Naive thymus-derived CD4-positive, alpha-beta T cell (primary cell): ENCODE measurements at regions of chr4 and their contacts with region 1.

Region 1: DNA sequence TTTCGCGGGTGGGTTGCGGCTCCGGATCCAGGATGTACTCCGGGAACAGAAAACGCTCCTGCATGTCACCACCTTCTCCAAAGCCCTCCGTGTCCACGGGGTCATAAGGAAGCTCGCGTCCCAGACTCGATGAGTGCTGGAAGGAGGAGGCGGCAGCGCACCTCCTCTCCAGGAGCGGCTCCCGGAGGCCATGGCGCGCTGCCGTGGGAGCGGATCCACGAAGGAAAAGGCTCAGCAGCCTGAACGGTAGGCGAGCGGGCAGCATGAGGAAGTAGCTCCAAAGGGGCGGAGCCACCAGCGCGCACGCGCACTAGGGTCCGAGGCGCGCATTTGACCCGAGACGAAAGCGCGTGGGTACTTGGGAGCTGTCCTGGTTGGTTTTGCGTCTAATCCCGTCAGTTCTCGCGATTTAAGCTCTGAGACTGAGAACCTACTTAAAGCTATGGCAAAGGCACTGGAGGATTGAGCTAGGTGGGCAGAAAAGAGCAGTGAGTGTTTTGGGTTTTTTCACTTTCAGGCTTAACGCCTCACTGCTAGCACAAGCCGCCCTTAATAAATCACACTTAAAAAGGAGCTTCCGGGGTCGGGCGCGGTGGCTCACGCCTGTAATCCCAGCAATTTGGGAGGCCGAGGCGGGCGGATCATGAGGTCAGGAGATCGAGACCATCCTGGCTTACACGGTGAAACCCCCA is at the start of gene NOA1:
- DNase-seq: peak; percentile 98 to 99 (median 99)
- ATAC-seq: peak; percentile 86
- H3K4me3 ChIP-seq: peak within 1 kb of the TSS; percentile 80
- H3K4me3 Mint-ChIP-seq: peak within 1 kb of the TSS; percentile 92 to 100 (median 98)
- H3K27ac ChIP-seq: peak within 1 kb of the TSS; percentile 82
- H3K27ac Mint-ChIP-seq: peak within 1 kb of the TSS; percentile 94 to 100 (median 98)
- H3K4me1 ChIP-seq: peaks cover 36 to 38% of the 10 kb centered on the region in 2 donors
- H3K4me1 Mint-ChIP-seq: peaks cover 41 to 70% (median 52%) of the 10 kb centered on the region in 7 donors
- H3K27me3 ChIP-seq: no peaks in the 10 kb centered on the region
- H3K27me3 Mint-ChIP-seq: peaks cover 0 to 2% (median 0%) of the 10 kb centered on the region in 5 donors
- total RNA-seq, gene NOA1: 13.6 to 23.0 (median 20.9) TPM

Region 2: GRCh38 chr4:55617587-55618197 is 1359.8 kb before region 1 on chr4:
- CTCF ChIA-PET with region 1: no interaction called
- POLR2A ChIA-PET with region 1: no interaction called
- intact Hi-C with region 1: no loop called
- DNase-seq: no peak
- ATAC-seq: no peak
- H3K4me3 ChIP-seq: no peak overlapping the region
- H3K4me3 Mint-ChIP-seq: no peak overlapping the region
- H3K27ac ChIP-seq: no peak overlapping the region
- H3K27ac Mint-ChIP-seq: no peak overlapping the region
- H3K4me1 ChIP-seq: no peaks in the 10 kb centered on the region
- H3K4me1 Mint-ChIP-seq: peaks cover 0 to 8% (median 0%) of the 10 kb centered on the region in 7 donors
- H3K27me3 ChIP-seq: no peaks in the 10 kb centered on the region
- H3K27me3 Mint-ChIP-seq: peaks cover 8 to 19% (median 10%) of the 10 kb centered on the region in 5 donors

Region 3: GRCh38 chr4:55853484-55854046 is 1123.9 kb before region 1 on chr4 and contains the start of gene EXOC1:
- CTCF ChIA-PET with region 1: no interaction called
- POLR2A ChIA-PET with region 1: no interaction called
- intact Hi-C with region 1: loop called (anchors 5 kb)
- DNase-seq: peak; percentile 93 to 98 (median 94)
- ATAC-seq: peak; percentile 99
- H3K4me3 ChIP-seq: peak within 1 kb of the TSS; percentile 84
- H3K4me3 Mint-ChIP-seq: peak within 1 kb of the TSS in 2 of 10 donors; percentile 34 to 69
- H3K27ac ChIP-seq: peak within 1 kb of the TSS; percentile 87
- H3K27ac Mint-ChIP-seq: peak within 1 kb of the TSS in 7 of 9 donors; percentile 75 to 94 (median 90)
- H3K4me1 ChIP-seq: peaks cover 26 to 31% of the 10 kb centered on the region in 2 donors
- H3K4me1 Mint-ChIP-seq: peaks cover 22 to 48% (median 42%) of the 10 kb centered on the region in 7 donors
- H3K27me3 ChIP-seq: no peaks in the 10 kb centered on the region
- H3K27me3 Mint-ChIP-seq: no peaks in the 10 kb centered on the region
- total RNA-seq, gene EXOC1: 20.3 to 46.7 (median 32.1) TPM

Region 4: DNA sequence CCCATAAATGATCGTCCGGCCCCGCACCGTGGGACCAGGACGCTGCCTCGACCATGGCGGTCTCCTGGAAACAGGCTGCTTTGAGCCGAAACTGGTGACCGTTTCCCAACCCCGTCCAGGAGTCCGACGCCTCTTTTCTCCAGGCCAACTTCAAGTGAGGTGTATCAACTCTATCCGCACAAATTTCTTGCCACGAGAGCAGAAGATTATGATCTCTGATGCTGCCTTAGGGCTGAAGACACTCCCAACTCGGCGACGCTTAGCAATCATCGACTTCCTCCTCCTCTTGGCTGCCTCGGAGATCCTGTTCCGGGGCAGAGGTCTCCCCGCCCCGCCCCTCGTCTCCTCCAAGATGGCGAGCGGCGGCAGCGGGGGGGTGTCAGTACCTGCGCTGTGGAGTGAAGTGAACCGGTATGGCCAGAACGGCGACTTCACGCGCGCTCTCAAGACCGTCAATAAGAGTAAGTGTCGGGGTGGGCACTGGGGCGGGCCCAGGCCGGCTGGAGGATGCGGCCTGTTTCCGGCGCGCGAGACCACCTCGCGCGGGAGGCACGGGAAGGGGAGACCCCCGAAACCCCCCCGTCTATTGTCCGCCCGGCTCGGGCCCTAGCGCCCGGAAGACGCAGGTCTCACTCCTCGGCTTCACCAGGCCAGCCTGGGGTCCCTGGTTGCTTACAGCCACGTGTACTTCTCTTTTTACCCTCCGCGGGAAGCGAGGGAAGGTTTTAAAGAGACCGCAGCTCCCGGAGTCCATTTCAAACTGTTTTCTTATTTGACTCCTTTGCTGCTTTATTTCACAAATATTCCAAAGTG is 510.0 kb before region 1 on chr4 and contains the start of gene SRP72:
- CTCF ChIA-PET with region 1: no interaction called
- POLR2A ChIA-PET with region 1: interaction called, 3 read pairs
- intact Hi-C with region 1: loop called (anchors 1 kb)
- DNase-seq: peak; percentile 80 to 95 (median 88)
- ATAC-seq: peak; percentile 98
- H3K4me3 ChIP-seq: peak within 1 kb of the TSS; percentile 98
- H3K4me3 Mint-ChIP-seq: peak within 1 kb of the TSS; percentile 93 to 100 (median 96)
- H3K27ac ChIP-seq: peak within 1 kb of the TSS; percentile 90
- H3K27ac Mint-ChIP-seq: peak within 1 kb of the TSS; percentile 94 to 99 (median 96)
- H3K4me1 ChIP-seq: peaks cover 25 to 29% of the 10 kb centered on the region in 2 donors
- H3K4me1 Mint-ChIP-seq: peaks cover 46 to 68% (median 62%) of the 10 kb centered on the region in 7 donors
- H3K27me3 ChIP-seq: no peaks in the 10 kb centered on the region
- H3K27me3 Mint-ChIP-seq: no peaks in the 10 kb centered on the region
- total RNA-seq, gene SRP72: 98.4 to 145 (median 109) TPM

Region 5: GRCh38 chr4:56530269-56531148 is 447.0 kb before region 1 on chr4:
- CTCF ChIA-PET with region 1: no interaction called
- POLR2A ChIA-PET with region 1: no interaction called
- intact Hi-C with region 1: loop called (anchors 1 kb)
- DNase-seq: peak; percentile 53 to 75 (median 59)
- ATAC-seq: peak; percentile 99
- H3K4me3 ChIP-seq: peak overlapping the region; percentile 91
- H3K4me3 Mint-ChIP-seq: peak overlapping the region in 1 of 10 donors; percentile 70
- H3K27ac ChIP-seq: peak overlapping the region; percentile 44
- H3K27ac Mint-ChIP-seq: peak overlapping the region in 3 of 9 donors; percentile 26 to 55 (median 38)
- H3K4me1 ChIP-seq: peaks cover 0 to 4% of the 10 kb centered on the region in 2 donors
- H3K4me1 Mint-ChIP-seq: peaks cover 0 to 2% (median 0%) of the 10 kb centered on the region in 7 donors
- H3K27me3 ChIP-seq: peaks cover 0 to 4% of the 10 kb centered on the region in 2 donors
- H3K27me3 Mint-ChIP-seq: peaks cover 0 to 22% (median 7%) of the 10 kb centered on the region in 5 donors

Region 6: DNA sequence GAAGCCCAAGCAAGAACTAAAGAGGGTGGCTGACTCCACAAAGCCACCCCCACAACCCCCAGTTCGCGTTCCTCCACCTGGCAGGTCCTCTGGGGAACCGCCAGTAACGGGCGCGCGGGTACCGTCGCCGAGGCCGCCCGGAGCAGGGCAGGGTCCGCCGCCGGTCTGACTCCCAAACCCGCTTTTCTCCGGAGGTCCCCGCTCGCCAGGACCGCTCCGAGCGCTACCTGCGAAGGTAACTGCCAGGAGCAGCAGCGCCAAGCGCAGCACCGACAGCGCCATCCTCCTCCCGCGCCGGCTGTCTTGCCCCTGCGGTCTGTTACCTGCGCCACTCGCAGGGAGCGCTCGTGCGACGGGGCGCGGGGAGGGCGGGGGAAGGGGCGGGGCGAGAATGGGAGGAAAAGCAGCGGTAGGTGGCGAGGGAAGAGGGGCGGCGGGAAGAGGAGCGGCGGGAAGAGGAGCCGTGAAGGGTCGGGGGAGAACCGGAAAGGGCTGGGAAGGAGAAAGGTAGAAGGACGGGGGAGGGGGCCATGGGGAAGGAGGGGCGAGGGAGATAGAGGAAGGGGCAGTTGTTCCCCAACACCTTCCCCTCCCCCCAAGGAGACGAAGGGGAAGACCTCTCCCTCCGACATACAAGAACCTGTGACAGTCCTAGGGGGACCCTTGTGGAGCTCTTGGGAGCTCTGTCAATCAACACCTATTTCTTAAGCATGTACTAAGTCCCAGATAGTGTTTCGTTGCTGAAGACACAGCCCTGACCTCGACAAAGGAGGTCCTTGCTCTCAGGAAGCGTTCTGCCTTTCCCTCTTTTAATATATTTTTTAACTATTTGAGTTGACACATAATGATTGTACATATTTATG is 155.9 kb before region 1 on chr4 and contains the start of gene SPINK2:
- CTCF ChIA-PET with region 1: no interaction called
- POLR2A ChIA-PET with region 1: no interaction called
- intact Hi-C with region 1: loop called in 1 of 2 experiments (anchors 5 kb)
- DNase-seq: peak; percentile 49 to 76 (median 68)
- ATAC-seq: peak; percentile 95
- H3K4me3 ChIP-seq: peak within 1 kb of the TSS; percentile 68
- H3K4me3 Mint-ChIP-seq: peak within 1 kb of the TSS; percentile 44 to 86 (median 80)
- H3K27ac ChIP-seq: no peak within 1 kb of the TSS
- H3K27ac Mint-ChIP-seq: peak within 1 kb of the TSS in 6 of 9 donors; percentile 57 to 79 (median 71)
- H3K4me1 ChIP-seq: peaks cover 12 to 17% of the 10 kb centered on the region in 2 donors
- H3K4me1 Mint-ChIP-seq: peaks cover 16 to 41% (median 35%) of the 10 kb centered on the region in 7 donors
- H3K27me3 ChIP-seq: no peaks in the 10 kb centered on the region
- H3K27me3 Mint-ChIP-seq: peaks cover 0 to 56% (median 0%) of the 10 kb centered on the region in 5 donors
- total RNA-seq, gene SPINK2: 0.99 to 5.8 (median 4.4) TPM

Region 7: DNA sequence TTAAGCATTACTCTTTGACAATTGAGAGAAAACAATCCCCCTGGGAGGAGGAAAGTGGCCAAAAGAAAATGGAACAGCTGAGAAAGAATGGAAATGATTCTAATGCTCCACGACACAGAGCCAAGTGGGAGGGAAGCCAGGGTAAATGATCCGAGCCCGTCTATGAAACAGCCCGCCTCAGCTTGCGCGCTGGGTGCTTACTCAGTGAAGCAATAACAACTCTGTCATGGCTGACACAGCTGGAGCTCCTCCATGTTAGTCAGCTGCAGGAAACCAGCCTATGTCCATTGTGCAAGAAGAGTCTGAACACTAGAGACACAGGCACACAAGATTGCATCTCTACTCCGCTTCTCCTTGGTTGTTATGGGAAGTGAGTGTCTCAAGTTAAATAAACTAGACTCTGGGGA is 19.4 kb before region 1 on chr4:
- CTCF ChIA-PET with region 1: no interaction called
- POLR2A ChIA-PET with region 1: interaction called, 5 read pairs
- intact Hi-C with region 1: loop called in 1 of 2 experiments (anchors 2 kb)
- DNase-seq: no peak
- ATAC-seq: peak; percentile 88
- H3K4me3 ChIP-seq: no peak overlapping the region
- H3K4me3 Mint-ChIP-seq: no peak overlapping the region
- H3K27ac ChIP-seq: no peak overlapping the region
- H3K27ac Mint-ChIP-seq: no peak overlapping the region
- H3K4me1 ChIP-seq: no peaks in the 10 kb centered on the region
- H3K4me1 Mint-ChIP-seq: peaks cover 0 to 2% (median 0%) of the 10 kb centered on the region in 7 donors
- H3K27me3 ChIP-seq: no peaks in the 10 kb centered on the region
- H3K27me3 Mint-ChIP-seq: no peaks in the 10 kb centered on the region

Region 8: DNA sequence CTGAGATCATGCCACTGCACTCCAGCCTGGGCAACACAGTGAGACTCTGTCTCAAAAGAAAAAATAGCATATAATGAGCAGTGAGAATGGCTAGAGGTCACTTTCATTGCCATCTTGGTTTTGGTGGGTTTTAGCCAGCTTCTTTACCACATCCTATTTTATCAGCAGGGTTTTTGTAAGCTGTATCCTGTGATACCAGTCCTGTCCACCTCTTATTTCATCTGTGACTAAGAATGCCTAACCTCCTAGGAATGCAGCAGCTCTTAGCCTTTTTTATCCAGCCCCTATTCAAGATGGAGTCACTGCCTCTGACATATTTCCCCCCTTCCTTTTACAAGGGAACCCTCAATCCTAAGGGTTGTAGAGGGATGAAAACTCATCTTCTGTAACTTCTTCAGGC is 158.8 kb after region 1 on chr4:
- CTCF ChIA-PET with region 1: no interaction called
- POLR2A ChIA-PET with region 1: no interaction called
- intact Hi-C with region 1: no loop called
- DNase-seq: no peak
- ATAC-seq: no peak
- H3K4me3 ChIP-seq: no peak overlapping the region
- H3K4me3 Mint-ChIP-seq: no peak overlapping the region
- H3K27ac ChIP-seq: no peak overlapping the region
- H3K27ac Mint-ChIP-seq: no peak overlapping the region
- H3K4me1 ChIP-seq: no peaks in the 10 kb centered on the region
- H3K4me1 Mint-ChIP-seq: no peaks in the 10 kb centered on the region
- H3K27me3 ChIP-seq: no peaks in the 10 kb centered on the region
- H3K27me3 Mint-ChIP-seq: peaks cover 0 to 23% (median 9%) of the 10 kb centered on the region in 5 donors